ENCODE measurements at regions of chr10 and their contacts with region 1.

Region 1: GRCh38 chr10:98309366-98310355 is 41.7 kb upstream of the LOXL4 start:
- DNase-seq: peak; percentile 72
- H3K4me3 ChIP-seq: peak overlapping the region; percentile 10
- H3K27ac ChIP-seq: no peak overlapping the region
- H3K4me1 ChIP-seq: peaks cover 14% of the 10 kb centered on the region
- H3K27me3 ChIP-seq: peaks cover 15% of the 10 kb centered on the region
- CTCF ChIP-seq: peak; percentile 89

Region 2: GRCh38 chr10:98170249-98171117 is 139.2 kb before region 1 on chr10:
- intact Hi-C with region 1: loop called (anchors 5 kb)
- DNase-seq: no peak
- H3K4me3 ChIP-seq: no peak overlapping the region
- H3K27ac ChIP-seq: no peak overlapping the region
- H3K4me1 ChIP-seq: peaks cover 36% of the 10 kb centered on the region
- H3K27me3 ChIP-seq: no peaks in the 10 kb centered on the region
- CTCF ChIP-seq: peak; percentile 85

Region 3: GRCh38 chr10:98269072-98269912 is 40.4 kb before region 1 on chr10:
- intact Hi-C with region 1: loop called (anchors 5 kb)
- DNase-seq: peak; percentile 85
- H3K4me3 ChIP-seq: peak overlapping the region; percentile 63
- H3K27ac ChIP-seq: peak overlapping the region; percentile 84
- H3K4me1 ChIP-seq: peaks cover 37% of the 10 kb centered on the region
- H3K27me3 ChIP-seq: no peaks in the 10 kb centered on the region
- CTCF ChIP-seq: no peak

Region 4: GRCh38 chr10:98404571-98405359 is 95.1 kb after region 1 on chr10:
- intact Hi-C with region 1: no loop called
- DNase-seq: no peak
- H3K4me3 ChIP-seq: no peak overlapping the region
- H3K27ac ChIP-seq: no peak overlapping the region
- H3K4me1 ChIP-seq: peaks cover 6% of the 10 kb centered on the region
- H3K27me3 ChIP-seq: no peaks in the 10 kb centered on the region
- CTCF ChIP-seq: no peak

Measured in left ventricle myocardium inferior (tissue), 1 donor.